GM10248 (cell line): ENCODE measurements at regions of chr5 and their contacts with region 1.

Region 1: DNA sequence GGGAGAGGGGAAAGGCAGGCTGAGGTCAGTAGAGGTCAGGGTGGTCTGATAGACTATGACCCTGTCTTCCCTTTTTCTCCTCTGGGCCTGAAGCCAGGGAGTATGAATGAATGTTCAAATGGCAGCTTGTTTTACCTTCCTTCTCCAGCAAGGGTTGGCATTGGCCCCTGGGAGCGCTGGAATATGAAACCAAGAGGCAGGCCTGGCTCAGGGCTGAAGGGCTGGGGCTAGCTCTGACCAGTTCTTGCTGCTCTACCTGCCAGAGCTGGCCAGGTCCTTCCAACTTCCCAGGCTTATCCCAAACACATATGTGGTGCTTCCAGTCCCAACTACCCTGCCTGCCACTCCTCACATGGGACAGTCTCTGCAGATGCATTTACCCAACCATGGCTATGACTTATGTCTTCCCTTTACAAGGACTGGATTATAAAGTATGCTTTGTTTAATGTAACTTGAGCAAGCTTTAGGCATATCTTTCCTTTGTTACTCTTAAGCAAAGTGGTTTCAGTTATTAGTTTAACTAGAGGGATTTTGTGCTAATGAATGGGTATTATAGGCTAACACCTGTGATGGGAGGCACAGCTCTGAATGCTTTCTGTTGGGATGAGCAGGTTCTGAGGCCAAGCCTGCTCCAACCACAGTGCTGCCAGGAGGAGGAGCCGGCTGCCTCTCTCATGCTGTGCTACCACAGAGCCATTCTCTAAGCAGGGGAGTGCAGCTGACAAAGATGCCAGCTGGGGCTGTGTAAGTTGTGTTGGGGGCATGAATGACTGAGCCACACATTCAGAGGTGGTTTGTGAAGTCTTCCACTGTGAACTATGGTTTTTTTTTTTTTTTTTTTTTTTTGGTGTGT is 6.1 kb downstream of the CCNI2 start:
- DNase-seq: no peak
- CTCF ChIP-seq: peak; percentile 35

Region 2: DNA sequence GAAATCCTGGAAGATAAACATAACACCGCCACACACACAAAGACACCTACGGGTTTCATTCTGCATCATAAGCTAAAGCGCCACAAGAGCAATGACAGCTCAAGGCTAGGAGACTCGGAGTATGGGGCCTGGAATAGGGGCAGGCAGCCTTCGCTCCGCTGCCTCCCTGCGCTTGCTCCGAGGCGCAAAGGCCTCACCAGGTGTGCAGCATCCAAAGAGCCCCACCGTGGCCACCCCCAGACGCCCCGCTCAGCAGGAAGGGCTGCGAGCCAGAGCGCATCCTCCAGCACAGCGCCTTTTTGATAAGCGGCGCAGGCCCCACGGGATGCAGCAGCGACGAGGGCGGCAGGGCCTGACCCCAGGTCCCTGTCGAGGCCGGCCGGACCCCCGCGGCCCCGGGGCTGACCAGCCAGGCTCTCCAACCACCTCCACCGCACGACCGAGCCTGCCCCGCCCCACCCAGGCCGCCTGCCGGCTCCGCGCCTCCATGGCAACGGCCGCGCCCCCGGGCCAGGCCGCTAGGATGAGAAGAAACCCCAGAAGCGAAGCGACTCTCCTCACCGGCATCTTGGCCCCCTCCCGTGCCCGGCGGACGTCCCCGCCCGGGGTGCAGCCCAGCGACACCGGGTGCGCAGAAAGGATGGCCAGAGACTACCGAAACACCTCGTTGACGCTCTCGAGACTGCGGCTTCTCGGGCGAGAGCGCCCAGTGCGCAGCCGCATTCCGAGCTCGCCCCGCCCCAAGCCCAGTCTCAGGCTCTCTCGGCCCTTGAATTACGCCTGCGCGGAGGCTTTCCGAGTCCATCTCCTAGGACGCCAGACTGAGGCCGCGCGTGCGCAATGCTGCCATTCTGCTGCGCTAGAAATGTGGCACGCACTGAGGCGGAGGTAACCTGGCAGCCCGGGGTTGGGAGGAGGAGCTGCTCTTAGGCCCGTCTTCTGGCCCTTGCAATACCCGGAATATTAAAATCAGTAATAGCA is 16.2 kb before region 1 on chr5 and contains the start of gene KIF3A:
- CTCF ChIA-PET with region 1: interaction called, 20 read pairs
- POLR2A ChIA-PET with region 1: no interaction called
- DNase-seq: peak; percentile 100
- CTCF ChIP-seq: no peak

Region 3: DNA sequence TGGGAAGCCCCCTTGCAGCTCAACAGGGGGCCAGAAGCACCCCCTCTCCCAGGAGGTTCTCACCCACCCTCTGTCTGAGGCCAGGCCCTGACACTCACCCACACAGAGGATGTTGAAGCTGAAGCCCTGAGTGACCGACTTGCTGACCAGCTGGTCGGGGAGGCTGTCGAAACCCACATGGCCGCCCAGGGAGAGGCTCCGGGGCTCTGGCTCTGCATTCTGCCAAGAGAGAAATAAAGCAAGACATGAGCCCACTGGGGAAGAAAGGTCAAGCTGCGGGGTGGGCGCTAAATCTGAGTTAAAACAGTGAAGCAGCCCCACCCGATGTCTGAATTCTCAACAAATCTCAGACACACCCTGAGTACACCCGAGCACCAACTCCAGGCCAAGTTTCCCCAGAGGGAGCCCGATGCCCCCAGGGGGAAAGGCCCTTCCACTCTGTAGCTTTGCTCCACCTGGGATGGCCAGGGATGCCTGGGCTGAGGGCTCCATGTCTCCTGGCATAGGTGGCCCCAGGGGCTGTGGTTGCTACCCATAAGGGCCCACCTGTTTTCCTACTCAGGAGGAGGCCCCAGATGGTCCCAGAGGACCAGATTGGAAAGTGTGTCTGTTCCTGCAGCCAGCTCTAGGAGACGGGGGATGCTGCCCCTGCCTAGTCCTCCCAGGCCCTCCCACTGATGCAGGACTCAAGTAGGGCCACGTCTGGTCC is 12.1 kb after region 1 on chr5:
- CTCF ChIA-PET with region 1: interaction called, 18 read pairs
- POLR2A ChIA-PET with region 1: no interaction called
- DNase-seq: no peak
- CTCF ChIP-seq: no peak

Region 4: DNA sequence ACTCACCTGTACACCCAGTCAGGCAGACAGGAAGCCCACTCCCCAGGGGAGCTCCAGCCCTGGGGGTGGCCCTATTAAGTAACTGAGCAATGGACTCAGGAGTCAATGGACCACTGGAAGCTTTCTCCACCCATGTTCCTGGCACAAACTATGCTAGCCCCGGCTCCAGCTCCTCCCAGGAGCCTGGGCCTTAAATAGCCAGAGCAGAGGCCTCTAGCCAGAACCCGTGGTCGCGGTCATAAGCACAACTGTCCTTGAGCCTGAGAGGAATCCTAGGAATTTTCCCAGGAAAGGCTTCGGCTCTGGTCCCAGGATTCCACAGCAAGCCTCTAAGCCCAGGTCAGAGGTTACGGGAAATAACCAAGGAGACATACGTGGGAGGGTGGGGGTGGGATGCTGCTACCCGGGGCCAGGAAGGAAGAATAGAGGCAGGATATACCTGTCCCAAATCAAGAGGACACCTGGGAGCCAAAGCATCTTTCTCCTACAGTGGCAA is 18.2 kb after region 1 on chr5:
- CTCF ChIA-PET with region 1: interaction called, 18 read pairs
- POLR2A ChIA-PET with region 1: no interaction called
- DNase-seq: no peak
- CTCF ChIP-seq: no peak